CD14-positive monocyte (primary cell): ENCODE measurements at regions of chr1 and their contacts with region 1.

Region 1: DNA sequence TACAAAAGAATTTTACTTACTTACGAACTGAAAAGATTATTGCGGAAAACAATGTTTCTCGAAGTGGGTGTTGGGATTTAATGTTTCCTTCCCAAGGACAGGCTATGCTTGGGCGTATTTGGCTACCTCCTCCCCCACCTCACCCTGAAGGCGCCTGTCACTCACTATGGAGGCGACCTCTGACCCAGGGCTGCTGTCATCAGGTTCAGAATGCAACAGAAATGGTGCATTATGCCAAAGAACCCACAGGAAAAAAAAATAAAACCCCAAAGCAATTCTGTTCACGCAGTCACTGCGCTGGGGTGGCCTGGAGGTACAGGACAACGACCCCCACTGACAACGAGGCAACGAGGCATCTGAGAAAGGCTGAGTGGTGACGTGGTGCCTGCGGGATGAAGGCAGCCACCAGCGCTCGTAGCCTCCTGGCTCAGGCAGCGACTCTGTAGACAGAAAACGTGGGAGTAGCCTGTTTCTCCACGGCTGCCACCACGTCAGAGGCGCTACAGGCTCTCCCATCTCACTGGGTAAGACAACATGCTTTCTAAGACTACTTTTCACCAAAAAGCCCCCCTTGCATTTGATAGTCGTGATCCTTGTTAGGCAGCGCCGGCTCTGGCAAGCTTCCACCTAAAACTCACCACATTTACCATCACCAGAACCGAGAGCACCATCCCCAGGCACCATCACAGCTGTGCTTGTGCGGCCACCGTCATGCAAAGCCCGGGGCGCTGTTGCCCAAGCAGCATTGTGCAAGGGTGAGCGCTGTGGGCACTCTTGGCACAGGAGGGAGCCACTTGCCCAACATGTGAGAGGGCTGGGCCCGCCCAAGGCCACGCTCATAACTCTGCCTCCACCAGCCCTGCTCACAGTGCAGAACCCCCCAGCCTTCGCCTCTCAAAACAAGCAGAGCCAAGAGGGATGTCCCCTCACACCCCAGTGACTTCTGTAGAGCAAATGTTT is 14.3 kb downstream of the NADK start:
- DNase-seq: peak; percentile 85 to 90 (median 89)
- H3K4me3 ChIP-seq: no peak overlapping the region
- H3K4me3 Mint-ChIP-seq: peak overlapping the region; percentile 9 to 56
- H3K27ac ChIP-seq: peak overlapping the region; percentile 51 to 75
- H3K27ac Mint-ChIP-seq: peak overlapping the region; percentile 83 to 95 (median 87)
- H3K4me1 ChIP-seq: peaks cover 37 to 53% of the 10 kb centered on the region in 2 donors
- H3K4me1 Mint-ChIP-seq: peaks cover 48% of the 10 kb centered on the region
- H3K27me3 ChIP-seq: no peaks in the 10 kb centered on the region
- H3K27me3 Mint-ChIP-seq: peaks cover 0 to 2% (median 0%) of the 10 kb centered on the region in 3 donors
- CTCF ChIP-seq: peak; percentile 68

Region 2: DNA sequence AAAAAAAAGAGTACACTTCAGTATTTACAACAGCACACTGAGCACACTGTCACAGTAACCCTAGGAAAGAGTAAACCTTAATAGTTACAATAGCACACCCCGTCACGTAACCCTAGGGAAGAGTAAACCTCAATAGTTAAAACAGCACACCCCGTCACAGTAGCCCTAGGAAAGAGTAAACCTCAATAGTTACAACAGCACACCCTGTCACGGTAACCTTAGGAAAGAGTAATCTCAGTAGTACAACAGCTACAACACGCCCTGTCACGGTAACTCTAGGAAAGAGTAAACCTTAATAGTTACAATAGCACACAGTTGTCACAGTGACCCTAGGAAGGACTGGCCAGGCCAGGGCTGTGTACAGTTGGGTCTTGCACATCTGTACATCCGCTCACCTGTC is 42.7 kb before region 1 on chr1:
- intact Hi-C with region 1: no loop called
- DNase-seq: no peak
- H3K4me3 ChIP-seq: no peak overlapping the region
- H3K4me3 Mint-ChIP-seq: no peak overlapping the region
- H3K27ac ChIP-seq: no peak overlapping the region
- H3K27ac Mint-ChIP-seq: peak overlapping the region in 1 of 7 donors; percentile 4
- H3K4me1 ChIP-seq: no peaks in the 10 kb centered on the region
- H3K4me1 Mint-ChIP-seq: peaks cover 1% of the 10 kb centered on the region
- H3K27me3 ChIP-seq: no peaks in the 10 kb centered on the region
- H3K27me3 Mint-ChIP-seq: peaks cover 0 to 2% (median 2%) of the 10 kb centered on the region in 3 donors
- CTCF ChIP-seq: no peak

Region 3: GRCh38 chr1:1826356-1827088 is 62.6 kb after region 1 on chr1:
- intact Hi-C with region 1: no loop called
- DNase-seq: no peak
- H3K4me3 ChIP-seq: no peak overlapping the region
- H3K4me3 Mint-ChIP-seq: no peak overlapping the region
- H3K27ac ChIP-seq: peak overlapping the region in 1 of 2 donors; percentile 36
- H3K27ac Mint-ChIP-seq: peak overlapping the region in 2 of 7 donors; percentile 63 to 76
- H3K4me1 ChIP-seq: no peaks in the 10 kb centered on the region
- H3K4me1 Mint-ChIP-seq: no peaks in the 10 kb centered on the region
- H3K27me3 ChIP-seq: no peaks in the 10 kb centered on the region
- H3K27me3 Mint-ChIP-seq: no peaks in the 10 kb centered on the region
- CTCF ChIP-seq: no peak

Region 4: DNA sequence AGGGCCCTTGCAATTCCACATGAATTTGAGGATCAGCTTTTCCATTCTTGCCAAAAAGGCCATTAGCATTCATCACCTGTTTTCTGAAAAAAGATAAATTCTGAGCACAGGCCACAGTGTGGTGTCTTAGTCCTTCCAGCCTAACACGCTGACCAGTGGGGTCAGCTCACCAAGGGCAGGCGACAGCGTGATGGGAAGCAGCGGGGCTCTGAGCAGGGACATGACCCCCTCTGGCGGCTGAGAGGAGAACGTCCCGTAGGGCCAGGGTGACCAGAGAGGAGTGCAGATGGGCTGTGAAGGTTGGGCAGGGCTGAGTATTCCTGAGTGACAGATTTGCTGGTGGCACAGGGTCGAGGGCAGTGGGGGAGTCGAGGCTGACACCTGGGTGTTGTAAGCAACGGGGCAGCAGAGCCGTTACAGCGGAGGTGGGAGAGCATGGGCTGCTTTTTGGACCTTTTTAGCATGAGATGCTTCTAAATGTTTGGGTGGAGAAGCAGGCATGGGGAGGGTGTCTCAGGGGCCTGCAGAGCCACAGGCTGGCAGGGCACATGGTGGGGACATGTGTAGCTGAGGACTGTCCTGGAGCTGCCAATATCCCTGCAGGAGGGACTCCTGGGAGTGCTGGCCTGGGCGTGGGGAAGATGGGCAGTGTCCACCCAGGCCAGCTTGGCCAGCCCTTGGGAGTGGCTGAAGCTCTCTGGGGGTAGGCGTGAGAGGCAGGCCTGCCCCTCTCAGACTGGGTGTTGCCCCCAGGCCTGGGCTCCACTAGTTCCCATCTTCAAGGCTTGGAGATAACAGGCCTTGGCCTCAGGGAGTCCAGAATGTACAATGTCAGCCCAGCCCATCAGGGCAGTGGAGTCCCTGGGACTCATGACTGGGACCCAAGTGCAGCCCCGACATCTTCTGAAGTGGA is 142.5 kb after region 1 on chr1:
- intact Hi-C with region 1: loop called in 1 of 2 experiments (anchors 5 kb)
- DNase-seq: peak; percentile 80 to 85 (median 81)
- H3K4me3 ChIP-seq: no peak overlapping the region
- H3K4me3 Mint-ChIP-seq: peak overlapping the region in 1 of 2 donors; percentile 17
- H3K27ac ChIP-seq: no peak overlapping the region
- H3K27ac Mint-ChIP-seq: peak overlapping the region in 4 of 7 donors; percentile 35 to 80 (median 50)
- H3K4me1 ChIP-seq: peaks cover 13 to 17% of the 10 kb centered on the region in 2 donors
- H3K4me1 Mint-ChIP-seq: peaks cover 14% of the 10 kb centered on the region
- H3K27me3 ChIP-seq: peaks cover 0 to 5% of the 10 kb centered on the region in 2 donors
- H3K27me3 Mint-ChIP-seq: peaks cover 3 to 7% (median 6%) of the 10 kb centered on the region in 3 donors
- CTCF ChIP-seq: peak; percentile 84